ENCODE measurements at regions of chr11 and their contacts with region 1.

Region 1: DNA sequence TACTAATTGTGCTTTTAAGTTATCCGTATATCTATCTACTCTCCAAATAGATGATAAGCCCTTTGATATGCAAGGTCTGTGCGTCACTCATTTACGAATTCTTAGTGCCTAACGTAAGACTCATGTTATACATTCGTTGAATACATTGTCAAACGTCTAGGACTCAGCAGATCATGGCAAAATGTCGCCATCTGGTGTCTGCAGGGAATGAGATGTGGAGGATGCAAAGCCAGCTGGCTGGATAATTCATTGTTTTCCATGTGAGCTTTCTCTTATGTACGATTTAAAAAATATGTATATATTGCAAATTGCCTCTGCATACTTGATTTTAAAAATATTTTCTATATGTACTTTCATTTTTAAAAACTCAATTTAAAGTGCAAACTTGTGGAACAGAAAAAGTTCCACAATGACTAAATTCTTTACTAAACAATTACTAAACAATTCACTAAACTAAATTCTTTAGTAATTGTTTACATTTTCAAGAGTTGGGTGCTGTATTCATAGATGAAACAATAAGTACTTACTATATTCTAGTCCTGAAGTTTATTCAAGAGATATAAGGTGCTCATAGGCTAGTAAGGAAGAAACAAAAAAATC is 33.8 kb downstream of the ZNF202 start:
- DNase-seq: peak; percentile 57
- CTCF ChIP-seq: peak; percentile 81

Region 2: GRCh38 chr11:123628936-123629683 is 78.6 kb before region 1 on chr11:
- CTCF ChIA-PET with region 1: interaction called, 250 read pairs
- POLR2A ChIA-PET with region 1: no interaction called
- DNase-seq: no peak
- CTCF ChIP-seq: no peak

Region 3: GRCh38 chr11:123654566-123655081 is 53.1 kb before region 1 on chr11 and contains the start of gene SCN3B:
- CTCF ChIA-PET with region 1: interaction called, 15 read pairs
- POLR2A ChIA-PET with region 1: no interaction called
- DNase-seq: peak; percentile 44
- CTCF ChIP-seq: no peak

Region 4: GRCh38 chr11:123690485-123690884 is 17.2 kb before region 1 on chr11:
- CTCF ChIA-PET with region 1: interaction called, 21 read pairs
- POLR2A ChIA-PET with region 1: no interaction called
- DNase-seq: no peak
- CTCF ChIP-seq: no peak

Region 5: DNA sequence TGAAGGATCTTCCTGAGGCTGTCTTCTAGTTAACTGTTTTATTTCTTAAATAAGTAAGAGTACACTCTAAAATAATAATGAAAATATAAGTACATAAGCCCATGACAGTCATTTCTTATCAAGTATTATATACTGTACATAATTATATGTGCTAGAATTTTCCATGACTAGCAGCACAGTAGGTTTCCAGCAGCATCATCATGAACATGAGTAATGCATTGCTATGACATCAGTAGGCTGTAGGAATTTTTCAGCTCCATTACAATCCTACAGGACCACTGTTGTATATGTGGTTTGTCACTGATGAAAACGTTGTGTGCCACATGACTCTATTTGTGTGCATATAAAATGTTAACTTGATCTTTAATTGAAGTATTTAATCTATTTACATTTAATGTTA is 11.7 kb after region 1 on chr11:
- CTCF ChIA-PET with region 1: interaction called, 40 read pairs
- POLR2A ChIA-PET with region 1: no interaction called
- DNase-seq: no peak
- CTCF ChIP-seq: no peak

Region 6: DNA sequence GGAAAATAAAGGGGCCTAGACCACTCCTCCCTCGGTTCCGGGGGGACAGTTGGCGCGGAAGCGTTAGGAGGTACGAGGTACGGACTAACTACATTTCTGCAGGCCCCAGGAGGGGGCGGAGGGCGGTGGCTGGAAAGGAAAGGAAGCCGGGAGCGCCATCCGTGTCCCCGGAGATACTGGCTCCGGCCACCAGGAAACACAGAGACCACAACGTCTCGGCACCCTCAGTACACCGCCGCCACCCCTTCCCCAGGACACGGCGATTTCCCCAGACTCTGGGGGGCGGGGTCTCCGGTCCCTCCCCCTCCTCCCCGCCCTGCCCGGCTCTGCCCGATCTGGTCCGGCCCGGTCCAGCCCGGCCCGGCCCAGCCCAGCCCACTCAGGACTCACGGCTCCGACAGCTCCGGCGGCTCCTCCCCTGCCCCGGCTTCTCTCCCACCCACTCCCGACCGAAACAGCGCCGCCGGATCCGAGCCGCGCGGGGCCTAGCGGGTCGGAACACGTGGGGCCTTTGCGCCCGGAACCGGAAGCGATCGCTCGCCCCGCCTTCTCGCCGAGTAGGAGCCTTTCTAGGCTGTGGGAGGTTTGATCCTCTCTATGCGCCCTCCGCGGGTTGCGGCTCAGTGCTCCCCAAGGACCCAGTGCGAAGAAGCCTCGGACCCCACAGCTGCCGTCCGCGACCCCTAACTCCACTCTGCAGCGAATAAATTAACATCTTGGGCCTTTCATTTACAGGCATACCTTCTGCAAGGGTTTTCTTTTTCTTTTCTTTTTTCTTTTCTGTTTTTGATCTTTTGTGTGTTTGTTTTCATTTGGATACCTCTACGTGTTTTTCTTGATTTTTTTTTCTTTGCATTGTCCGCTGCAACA is 33.7 kb after region 1 on chr11 and contains the start of gene ZNF202:
- CTCF ChIA-PET with region 1: interaction called, 24 read pairs
- POLR2A ChIA-PET with region 1: no interaction called
- DNase-seq: peak; percentile 92
- CTCF ChIP-seq: no peak

Measured in GM10248 (cell line).